Activated CD8-positive, alpha-beta T cell treated with anti-CD3 and anti-CD28 coated beads, Interleukin-2, amount 10 ng/mL, durations not matched to agents 7 days and 5 days (primary cell): ENCODE measurements at regions of chr3 and their contacts with region 1.

Region 1: DNA sequence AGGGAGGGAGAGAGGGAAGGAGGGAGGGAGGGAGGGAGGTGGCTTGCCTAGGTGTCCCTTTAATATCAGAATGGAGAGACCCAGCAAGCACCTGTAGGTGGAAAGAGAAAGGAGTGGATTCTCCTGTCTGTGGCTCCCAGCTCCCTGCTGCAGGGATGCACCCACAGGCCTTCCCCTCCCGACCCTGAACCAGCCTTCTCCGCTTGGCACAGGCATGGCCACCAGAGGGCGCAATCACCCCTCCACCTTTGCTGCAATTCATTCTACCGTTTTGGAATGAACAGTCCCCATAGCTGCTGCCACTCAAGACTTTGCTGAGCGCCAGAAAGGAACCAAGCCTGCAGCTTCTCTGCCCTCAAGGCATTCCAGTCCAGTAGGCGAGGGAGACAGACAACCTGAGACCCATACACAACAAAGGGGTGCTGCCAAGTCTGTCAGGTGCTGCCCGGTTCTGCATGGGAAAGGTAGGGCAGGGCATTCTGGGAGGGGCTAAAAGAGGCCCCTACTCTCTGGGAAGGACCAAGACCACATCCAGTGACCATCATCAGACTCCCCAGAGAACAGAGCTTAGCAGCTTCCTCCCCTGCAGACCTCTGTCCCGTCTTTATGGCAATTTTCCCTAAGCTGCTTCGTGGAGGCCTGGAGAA is 4.9 kb downstream of the TLR9 start:
- DNase-seq: peak; percentile 93
- ATAC-seq: peak; percentile 66
- H3K4me3 Mint-ChIP-seq: peak overlapping the region; percentile 81
- H3K27ac Mint-ChIP-seq: peak overlapping the region; percentile 81
- H3K4me1 Mint-ChIP-seq: peaks cover 96% of the 10 kb centered on the region
- H3K27me3 Mint-ChIP-seq: no peaks in the 10 kb centered on the region

Region 2: DNA sequence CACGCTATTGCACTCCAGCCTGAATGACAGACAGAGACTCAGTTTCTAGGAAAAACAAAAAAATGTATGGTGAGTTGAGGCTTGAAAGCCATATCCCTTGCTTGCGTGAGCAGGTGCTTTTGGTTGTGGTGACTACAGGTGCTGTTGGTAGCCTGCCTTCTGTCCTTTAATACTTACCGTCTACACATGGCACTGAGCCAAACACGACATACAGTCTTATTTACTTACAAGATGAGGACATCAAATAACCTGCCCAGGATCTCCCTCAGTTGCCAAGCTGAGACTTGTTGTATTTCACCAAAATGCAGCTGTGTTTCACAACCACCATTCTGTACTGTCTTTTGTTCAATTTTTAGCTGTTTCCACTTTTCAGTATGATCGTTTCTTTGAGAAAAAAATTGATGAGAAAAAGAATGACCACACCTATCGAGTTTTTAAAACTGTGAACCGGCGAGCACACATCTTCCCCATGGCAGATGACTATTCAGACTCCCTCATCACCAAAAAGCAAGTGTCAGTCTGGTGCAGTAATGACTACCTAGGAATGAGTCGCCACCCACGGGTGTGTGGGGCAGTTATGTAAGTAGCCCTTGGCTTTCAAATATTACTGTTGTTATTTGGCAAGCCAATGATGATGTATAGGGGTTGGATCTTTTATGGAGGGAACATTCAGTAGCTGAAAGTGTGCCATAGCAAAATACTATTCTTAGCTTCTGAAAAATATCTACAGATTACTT is 16.0 kb before region 1 on chr3:
- CTCF ChIA-PET with region 1: interaction called, 32 read pairs
- POLR2A ChIA-PET with region 1: no interaction called
- DNase-seq: no peak
- ATAC-seq: no peak
- H3K4me3 Mint-ChIP-seq: no peak overlapping the region
- H3K27ac Mint-ChIP-seq: peak overlapping the region; percentile 28
- H3K4me1 Mint-ChIP-seq: peaks cover 49% of the 10 kb centered on the region
- H3K27me3 Mint-ChIP-seq: no peaks in the 10 kb centered on the region

Region 3: GRCh38 chr3:52238761-52239701 is 18.5 kb after region 1 on chr3 and contains the start of gene TWF2:
- CTCF ChIA-PET with region 1: interaction called, 176 read pairs
- POLR2A ChIA-PET with region 1: interaction called, 32 read pairs
- DNase-seq: peak; percentile 85
- ATAC-seq: peak; percentile 83
- H3K4me3 Mint-ChIP-seq: peak within 1 kb of the TSS; percentile 96
- H3K27ac Mint-ChIP-seq: peak within 1 kb of the TSS; percentile 96
- H3K4me1 Mint-ChIP-seq: peaks cover 73% of the 10 kb centered on the region
- H3K27me3 Mint-ChIP-seq: no peaks in the 10 kb centered on the region
- total RNA-seq, gene TWF2: 154 to 162 TPM

Region 4: GRCh38 chr3:52278510-52279069 is 58.1 kb after region 1 on chr3 and contains the start of gene WDR82:
- CTCF ChIA-PET with region 1: interaction called, 57 read pairs
- POLR2A ChIA-PET with region 1: interaction called, 53 read pairs
- DNase-seq: peak; percentile 98
- ATAC-seq: peak; percentile 79
- H3K4me3 Mint-ChIP-seq: peak within 1 kb of the TSS; percentile 100
- H3K27ac Mint-ChIP-seq: peak within 1 kb of the TSS; percentile 99
- H3K4me1 Mint-ChIP-seq: peaks cover 56% of the 10 kb centered on the region
- H3K27me3 Mint-ChIP-seq: no peaks in the 10 kb centered on the region
- total RNA-seq, gene WDR82: 131 TPM

Region 5: DNA sequence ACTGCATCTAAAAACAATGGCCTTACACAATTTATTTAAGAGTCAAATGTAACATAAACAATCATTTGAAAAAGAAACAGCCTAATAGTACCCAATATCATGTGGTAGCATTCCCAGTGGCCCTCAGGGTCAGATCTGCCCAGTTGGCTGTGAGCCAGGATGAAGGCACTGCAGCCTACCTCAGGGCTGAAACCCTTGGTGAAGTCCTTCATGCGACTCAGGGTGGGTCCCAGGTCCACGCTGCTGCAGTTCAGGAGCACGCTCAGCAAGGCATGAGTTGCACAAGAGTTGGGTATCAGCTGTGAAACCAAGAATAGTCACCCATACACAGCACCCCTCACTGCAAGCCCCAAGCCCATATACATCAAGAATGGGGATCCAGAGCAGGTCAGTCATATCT is 187.3 kb after region 1 on chr3:
- CTCF ChIA-PET with region 1: interaction called, 11 read pairs
- POLR2A ChIA-PET with region 1: no interaction called
- DNase-seq: no peak
- ATAC-seq: no peak
- H3K4me3 Mint-ChIP-seq: peak overlapping the region; percentile 81
- H3K27ac Mint-ChIP-seq: peak overlapping the region; percentile 36
- H3K4me1 Mint-ChIP-seq: peaks cover 39% of the 10 kb centered on the region
- H3K27me3 Mint-ChIP-seq: no peaks in the 10 kb centered on the region